OCI-LY7 (cell line): ENCODE measurements at regions of chr10 and their contacts with region 1.

Region 1: DNA sequence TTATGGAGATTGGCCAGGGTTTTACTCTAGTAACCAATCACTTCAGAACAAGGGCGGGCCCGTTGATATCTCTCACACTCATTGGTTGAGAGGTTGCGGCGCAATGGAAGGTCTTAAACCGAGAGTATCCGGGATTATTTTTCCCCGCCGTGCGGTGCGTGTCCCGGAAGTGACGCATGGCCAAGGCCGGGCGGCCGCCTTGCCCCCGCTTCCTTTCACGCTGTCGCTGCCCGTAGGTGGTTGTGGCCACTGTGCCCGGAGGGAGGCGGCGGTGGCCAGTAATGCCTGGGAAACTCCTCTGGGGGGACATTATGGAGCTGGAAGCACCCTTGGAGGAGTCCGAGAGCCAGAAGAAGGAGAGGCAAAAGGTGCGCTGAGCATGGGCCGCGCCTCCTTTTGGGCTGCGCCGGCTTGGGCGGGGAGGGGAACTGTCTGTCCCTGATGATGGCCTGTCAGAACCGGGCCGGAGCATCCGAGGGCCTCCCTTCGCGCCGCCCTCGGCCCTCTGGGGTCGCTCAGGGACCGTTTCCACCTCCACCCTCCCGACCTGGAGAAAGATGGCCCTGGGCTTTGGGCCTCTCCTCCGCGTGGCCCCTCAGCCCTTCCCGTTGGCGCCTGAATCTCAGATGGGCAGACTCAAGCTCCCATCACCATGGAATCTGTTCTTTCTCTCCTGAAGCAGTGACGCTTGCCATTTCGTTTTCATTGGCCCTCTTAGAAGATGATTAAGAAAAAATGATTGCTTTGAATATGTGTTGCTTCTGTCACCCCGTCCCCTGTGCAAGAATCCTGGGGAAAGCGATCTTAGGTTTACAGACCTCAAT is at the start of gene DDX50:
- DNase-seq: peak; percentile 99
- H3K4me3 ChIP-seq: peak within 1 kb of the TSS; percentile 88
- H3K27ac ChIP-seq: peak within 1 kb of the TSS; percentile 58
- H3K4me1 ChIP-seq: peaks cover 21% of the 10 kb centered on the region
- CTCF ChIP-seq: no peak
- total RNA-seq, gene DDX50: 29.0 and 31.1 TPM in 2 replicates

Region 2: GRCh38 chr10:68208424-68209042 is 692.8 kb before region 1 on chr10:
- CTCF ChIA-PET with region 1: no interaction called
- POLR2A ChIA-PET with region 1: no interaction called
- intact Hi-C with region 1: loop called (anchors 2 kb)
- DNase-seq: peak; percentile 70
- H3K4me3 ChIP-seq: no peak overlapping the region
- H3K27ac ChIP-seq: no peak overlapping the region
- H3K4me1 ChIP-seq: peaks cover 18% of the 10 kb centered on the region
- CTCF ChIP-seq: peak; percentile 79

Region 3: DNA sequence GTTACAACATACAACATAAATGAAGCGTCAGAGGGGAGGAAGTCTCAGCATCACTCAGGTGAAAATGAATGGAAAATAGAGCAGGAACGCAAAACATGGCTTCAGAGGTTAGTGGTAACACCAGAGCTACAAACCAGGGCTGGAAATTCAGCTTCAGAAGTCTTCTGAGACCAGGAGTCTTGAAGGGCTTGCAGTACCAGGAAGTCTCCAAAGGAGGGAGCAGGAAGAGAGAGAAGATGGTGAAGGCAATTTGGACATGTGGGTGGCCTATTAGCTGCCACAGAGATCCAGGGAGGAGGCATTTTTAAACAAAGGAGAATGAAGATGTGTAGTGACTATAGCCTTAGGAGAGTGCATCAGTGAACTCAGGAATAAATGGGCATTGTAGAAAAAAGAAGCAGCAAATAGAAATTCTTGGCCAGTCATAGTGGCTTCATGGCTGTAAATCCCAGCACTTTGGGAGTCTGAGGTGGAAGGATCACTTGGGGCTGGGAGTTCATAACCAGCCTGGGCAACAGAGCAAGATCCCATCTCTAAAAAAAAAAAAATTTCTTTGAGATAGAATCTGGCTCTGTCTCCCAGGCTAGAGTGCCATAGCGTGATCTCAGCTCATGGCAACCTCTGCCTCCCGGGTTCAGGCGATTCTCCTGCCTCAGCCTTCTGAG is 350.4 kb before region 1 on chr10:
- CTCF ChIA-PET with region 1: no interaction called
- POLR2A ChIA-PET with region 1: no interaction called
- intact Hi-C with region 1: loop called (anchors 2 kb)
- DNase-seq: peak; percentile 72
- H3K4me3 ChIP-seq: no peak overlapping the region
- H3K27ac ChIP-seq: no peak overlapping the region
- H3K4me1 ChIP-seq: no peaks in the 10 kb centered on the region
- CTCF ChIP-seq: peak; percentile 83

Region 4: GRCh38 chr10:68720793-68721672 is 180.3 kb before region 1 on chr10 and contains the start of gene CCAR1:
- CTCF ChIA-PET with region 1: no interaction called
- POLR2A ChIA-PET with region 1: no interaction called
- intact Hi-C with region 1: loop called (anchors 1 kb)
- DNase-seq: peak; percentile 99
- H3K4me3 ChIP-seq: peak within 1 kb of the TSS; percentile 94
- H3K27ac ChIP-seq: peak within 1 kb of the TSS; percentile 71
- H3K4me1 ChIP-seq: peaks cover 12% of the 10 kb centered on the region
- CTCF ChIP-seq: no peak
- total RNA-seq, gene CCAR1: 66.3 and 66.4 TPM in 2 replicates

Region 5: GRCh38 chr10:68784476-68784875 is 116.8 kb before region 1 on chr10:
- CTCF ChIA-PET with region 1: no interaction called
- POLR2A ChIA-PET with region 1: no interaction called
- intact Hi-C with region 1: loop called (anchors 5 kb)
- DNase-seq: no peak
- H3K4me3 ChIP-seq: no peak overlapping the region
- H3K27ac ChIP-seq: no peak overlapping the region
- H3K4me1 ChIP-seq: peaks cover 15% of the 10 kb centered on the region
- CTCF ChIP-seq: no peak

Region 6: GRCh38 chr10:70866424-70866823 is 1965.1 kb after region 1 on chr10:
- CTCF ChIA-PET with region 1: no interaction called
- POLR2A ChIA-PET with region 1: no interaction called
- intact Hi-C with region 1: no loop called
- DNase-seq: no peak
- H3K4me3 ChIP-seq: no peak overlapping the region
- H3K27ac ChIP-seq: no peak overlapping the region
- H3K4me1 ChIP-seq: no peaks in the 10 kb centered on the region
- CTCF ChIP-seq: no peak